Activated CD4-positive, alpha-beta memory T cell treated with anti-CD3 and anti-CD28 coated beads, Interleukin-2, amount 10 ng/mL, durations not matched to agents 7 days and 5 days (primary cell): ENCODE measurements at regions of chr11 and their contacts with region 1.

Region 1: DNA sequence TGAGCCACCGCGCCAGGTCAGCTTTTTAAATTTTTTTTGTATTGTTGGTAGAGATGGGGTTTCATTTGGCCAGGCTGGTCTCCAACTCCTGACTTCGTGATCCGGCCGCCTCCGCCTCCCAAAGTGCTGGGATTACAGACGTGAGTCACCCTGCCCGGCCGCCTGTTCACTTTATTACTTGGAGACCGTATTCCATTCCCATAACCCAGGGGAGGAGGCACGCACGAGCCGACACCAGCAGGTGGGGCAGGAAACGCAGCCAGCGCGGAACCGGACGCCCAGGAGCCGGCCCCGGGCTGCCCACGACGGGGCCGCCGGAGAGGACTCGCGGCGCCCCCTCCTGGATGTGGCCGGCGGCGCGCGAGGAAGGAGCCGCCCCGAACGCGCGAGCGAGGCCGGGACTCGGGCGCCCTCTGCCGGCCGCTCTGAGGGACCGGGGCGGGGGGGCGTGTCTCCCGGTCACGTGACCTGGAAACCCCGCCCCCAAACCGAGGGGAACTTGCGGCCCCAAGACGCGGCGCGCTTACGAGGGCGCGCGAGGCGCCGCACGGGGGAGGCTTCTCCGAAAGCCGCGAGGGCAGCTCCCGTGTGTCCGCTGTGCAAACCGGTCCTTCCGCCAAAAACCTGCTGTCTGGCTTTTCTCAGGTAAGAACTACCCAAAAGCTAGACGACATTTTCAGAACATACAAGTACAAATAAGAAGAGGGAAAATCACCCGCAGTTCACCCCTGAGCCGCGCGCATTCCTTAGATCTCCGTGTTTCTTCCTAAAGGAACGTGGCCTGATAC is 11.6 kb upstream of the RNH1 start:
- DNase-seq: peak; percentile 94
- H3K4me3 Mint-ChIP-seq: peak overlapping the region; percentile 66
- H3K27ac Mint-ChIP-seq: peak overlapping the region; percentile 47
- H3K4me1 Mint-ChIP-seq: peaks cover 13% of the 10 kb centered on the region
- H3K27me3 Mint-ChIP-seq: no peaks in the 10 kb centered on the region

Region 2: GRCh38 chr11:506238-506994 is 12.2 kb before region 1 on chr11:
- CTCF ChIA-PET with region 1: interaction called, 21 read pairs
- POLR2A ChIA-PET with region 1: interaction called, 12 read pairs
- DNase-seq: peak; percentile 97
- H3K4me3 Mint-ChIP-seq: peak overlapping the region; percentile 95
- H3K27ac Mint-ChIP-seq: peak overlapping the region; percentile 99
- H3K4me1 Mint-ChIP-seq: peaks cover 40% of the 10 kb centered on the region
- H3K27me3 Mint-ChIP-seq: no peaks in the 10 kb centered on the region